CD8-positive, alpha-beta memory T cell (primary cell): ENCODE measurements at regions of chr10 and their contacts with region 1.

Region 1: DNA sequence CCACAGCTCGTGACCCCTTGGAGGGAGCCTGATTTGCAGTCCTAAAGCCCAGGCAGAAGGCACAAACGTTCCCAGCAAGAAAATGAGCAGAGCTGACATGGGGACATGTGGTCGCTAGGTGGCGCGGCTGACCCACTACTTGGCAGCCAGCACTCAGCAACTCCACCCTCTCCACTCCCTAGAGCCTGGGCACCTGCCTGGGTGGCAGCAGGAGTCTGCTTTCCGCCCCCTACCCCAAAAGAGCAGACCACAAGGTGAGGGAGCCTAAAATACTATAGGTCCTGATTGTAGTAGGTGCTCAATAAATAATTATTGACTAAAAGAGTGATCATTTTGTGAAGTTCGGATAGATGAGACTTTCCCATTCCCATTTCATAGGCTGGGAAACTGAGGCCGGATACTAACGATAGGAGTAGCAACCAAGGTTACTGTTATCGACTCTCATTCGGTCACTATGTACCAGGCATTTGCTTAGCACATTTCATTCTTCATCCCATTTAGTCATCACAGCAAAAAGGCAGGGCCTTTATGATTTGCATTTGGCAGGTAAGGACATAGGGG is 57.4 kb downstream of the NEUROG3 start:
- DNase-seq: peak; percentile 64 to 82 (median 65)
- H3K4me3 ChIP-seq: no peak overlapping the region
- H3K4me3 Mint-ChIP-seq: no peak overlapping the region
- H3K27ac ChIP-seq: no peak overlapping the region
- H3K27ac Mint-ChIP-seq: peak overlapping the region in 1 of 8 donors; percentile 63
- H3K4me1 ChIP-seq: no peaks in the 10 kb centered on the region
- H3K4me1 Mint-ChIP-seq: no peaks in the 10 kb centered on the region
- H3K27me3 ChIP-seq: peaks cover 7% of the 10 kb centered on the region
- H3K27me3 Mint-ChIP-seq: peaks cover 4 to 36% of the 10 kb centered on the region in 2 donors

Region 2: GRCh38 chr10:69527961-69528360 is 12.2 kb after region 1 on chr10:
- CTCF ChIA-PET with region 1: no interaction called
- POLR2A ChIA-PET with region 1: no interaction called
- DNase-seq: no peak
- H3K4me3 ChIP-seq: no peak overlapping the region
- H3K4me3 Mint-ChIP-seq: no peak overlapping the region
- H3K27ac ChIP-seq: no peak overlapping the region
- H3K27ac Mint-ChIP-seq: no peak overlapping the region
- H3K4me1 ChIP-seq: no peaks in the 10 kb centered on the region
- H3K4me1 Mint-ChIP-seq: no peaks in the 10 kb centered on the region
- H3K27me3 ChIP-seq: no peaks in the 10 kb centered on the region
- H3K27me3 Mint-ChIP-seq: peaks cover 14 to 38% of the 10 kb centered on the region in 2 donors

Region 3: DNA sequence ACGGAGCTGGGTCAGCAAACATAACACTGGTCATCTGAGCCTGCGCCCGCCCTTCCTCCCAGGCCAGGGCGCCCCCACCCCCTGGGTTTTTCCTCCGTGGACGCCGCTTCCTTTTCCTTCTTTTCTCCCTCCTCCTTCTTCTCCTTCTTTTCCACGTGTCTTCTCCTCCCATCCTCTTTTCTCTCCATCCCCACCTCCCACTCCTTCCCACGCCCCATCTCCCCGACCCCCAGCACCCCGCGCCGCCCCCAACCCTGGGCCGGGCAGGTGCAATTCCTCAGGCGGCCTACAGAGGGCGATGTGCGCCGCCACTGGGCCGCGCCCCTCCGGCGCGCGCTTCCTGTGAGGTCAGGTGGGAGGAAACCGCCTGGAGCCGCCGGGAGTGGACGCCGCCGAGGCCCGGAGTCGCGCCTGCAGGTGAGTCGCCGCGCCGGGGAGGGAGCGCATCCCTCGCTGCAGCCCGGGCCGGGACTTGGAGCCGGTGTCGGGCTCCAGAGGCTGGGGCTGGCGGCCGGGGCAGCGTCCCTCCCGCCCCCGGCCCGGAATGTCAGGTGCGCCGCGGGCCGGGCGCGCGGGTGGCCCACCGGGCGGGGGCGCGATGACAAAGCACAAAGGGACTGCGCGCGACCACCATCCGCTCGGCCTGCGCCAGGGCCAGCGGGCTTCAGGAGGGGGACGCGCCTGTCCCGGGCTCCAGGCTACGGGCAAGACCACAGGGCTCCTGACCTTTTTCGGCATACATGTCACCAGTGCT is 114.3 kb after region 1 on chr10 and contains the start of gene FAM241B:
- CTCF ChIA-PET with region 1: interaction called, 103 read pairs
- POLR2A ChIA-PET with region 1: no interaction called
- DNase-seq: peak; percentile 64 to 87 (median 72)
- H3K4me3 ChIP-seq: peak within 1 kb of the TSS; percentile 65
- H3K4me3 Mint-ChIP-seq: peak within 1 kb of the TSS; percentile 57 to 90 (median 72)
- H3K27ac ChIP-seq: peak within 1 kb of the TSS; percentile 16
- H3K27ac Mint-ChIP-seq: peak within 1 kb of the TSS in 7 of 8 donors; percentile 10 to 79 (median 48)
- H3K4me1 ChIP-seq: peaks cover 15% of the 10 kb centered on the region
- H3K4me1 Mint-ChIP-seq: peaks cover 17 to 29% (median 24%) of the 10 kb centered on the region in 3 donors
- H3K27me3 ChIP-seq: no peaks in the 10 kb centered on the region
- H3K27me3 Mint-ChIP-seq: peaks cover 0 to 2% of the 10 kb centered on the region in 2 donors
- total RNA-seq, gene FAM241B: 10.6 to 10.8 TPM

Region 4: DNA sequence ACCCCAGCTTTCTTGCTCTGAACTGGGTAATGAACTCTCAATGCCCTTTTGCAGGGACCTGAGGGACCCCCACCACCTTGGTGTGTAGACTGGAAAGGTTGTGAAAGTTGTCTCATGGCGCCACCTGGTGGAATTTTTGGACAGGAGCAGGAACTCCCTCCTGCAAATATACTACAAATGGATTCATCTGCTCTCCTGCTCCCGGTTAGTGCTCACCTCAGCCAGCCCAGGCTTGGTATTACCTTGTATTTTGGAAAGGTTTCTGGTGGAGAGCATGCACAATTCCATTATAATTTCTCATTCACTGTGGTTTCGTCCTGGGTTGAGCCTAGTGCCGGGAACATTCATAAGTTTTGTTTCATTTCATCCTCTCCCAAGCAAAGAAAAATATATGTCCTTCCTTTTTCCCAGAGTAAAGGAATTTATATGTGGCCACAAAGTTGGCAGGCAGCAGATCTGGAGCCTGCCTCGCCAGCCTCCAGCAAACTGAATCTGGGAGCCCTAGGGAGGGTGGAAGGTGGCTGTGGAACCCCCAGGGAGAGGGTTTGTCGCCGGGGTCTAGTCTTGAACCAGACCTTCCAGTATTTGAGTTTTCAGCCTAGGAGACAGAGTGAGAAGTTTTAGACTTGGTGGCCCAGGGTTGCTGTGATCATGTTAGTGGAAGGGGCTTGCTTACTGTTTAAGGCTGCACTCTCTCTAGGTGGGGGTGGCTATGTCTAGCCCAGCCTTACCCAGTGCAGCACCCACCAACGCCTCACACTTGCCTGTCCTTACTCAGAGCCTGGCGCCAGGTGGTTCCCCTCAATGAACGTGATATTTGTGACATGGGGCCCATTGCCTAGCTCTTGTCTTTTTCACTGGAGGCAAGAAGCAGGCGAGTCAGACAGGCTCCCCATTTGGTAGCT is 123.8 kb after region 1 on chr10:
- CTCF ChIA-PET with region 1: interaction called, 103 read pairs
- POLR2A ChIA-PET with region 1: no interaction called
- DNase-seq: peak; percentile 54 to 75 (median 58)
- H3K4me3 ChIP-seq: no peak overlapping the region
- H3K4me3 Mint-ChIP-seq: no peak overlapping the region
- H3K27ac ChIP-seq: no peak overlapping the region
- H3K27ac Mint-ChIP-seq: peak overlapping the region in 1 of 8 donors; percentile 58
- H3K4me1 ChIP-seq: no peaks in the 10 kb centered on the region
- H3K4me1 Mint-ChIP-seq: peaks cover 0 to 3% (median 0%) of the 10 kb centered on the region in 3 donors
- H3K27me3 ChIP-seq: no peaks in the 10 kb centered on the region
- H3K27me3 Mint-ChIP-seq: peaks cover 3 to 4% of the 10 kb centered on the region in 2 donors

Region 5: GRCh38 chr10:69742928-69743602 is 227.3 kb after region 1 on chr10:
- CTCF ChIA-PET with region 1: no interaction called
- POLR2A ChIA-PET with region 1: no interaction called
- DNase-seq: peak in 1 of 5 donors; percentile 8
- H3K4me3 ChIP-seq: no peak overlapping the region
- H3K4me3 Mint-ChIP-seq: no peak overlapping the region
- H3K27ac ChIP-seq: no peak overlapping the region
- H3K27ac Mint-ChIP-seq: no peak overlapping the region
- H3K4me1 ChIP-seq: no peaks in the 10 kb centered on the region
- H3K4me1 Mint-ChIP-seq: peaks cover 0 to 4% (median 0%) of the 10 kb centered on the region in 3 donors
- H3K27me3 ChIP-seq: no peaks in the 10 kb centered on the region
- H3K27me3 Mint-ChIP-seq: peaks cover 10 to 46% of the 10 kb centered on the region in 2 donors